KBM-7 (cell line): ENCODE measurements at regions of chr16 and their contacts with region 1.

Region 1: GRCh38 chr16:81376880-81377279 is 62.1 kb downstream of the GAN start:
- DNase-seq: no peak

Region 2: GRCh38 chr16:81723098-81723723 is 346.3 kb after region 1 on chr16:
- in situ Hi-C with region 1: loop called (anchors 25 kb)
- DNase-seq: peak; percentile 86

Region 3: DNA sequence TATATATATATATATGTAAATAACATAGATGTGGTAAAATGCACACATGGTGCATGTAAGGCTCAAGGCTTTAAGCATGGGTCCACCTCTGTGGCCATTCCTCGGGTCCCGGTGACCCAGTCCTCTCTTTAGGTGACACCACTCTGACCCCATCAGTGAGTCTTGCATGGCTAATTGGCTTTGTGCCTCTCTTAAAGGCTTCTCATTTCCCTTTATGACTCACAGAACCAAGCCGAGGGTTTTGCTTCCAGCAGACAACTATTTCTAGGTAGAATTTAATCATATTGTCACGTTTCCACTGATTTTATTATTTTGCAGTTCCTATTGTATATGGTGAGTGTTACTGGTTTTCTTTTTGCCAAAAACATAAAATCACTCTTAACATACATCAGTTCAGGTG is 461.9 kb after region 1 on chr16:
- in situ Hi-C with region 1: no loop called
- DNase-seq: no peak